ENCODE measurements at regions of chr12 and their contacts with region 1.

Region 1: DNA sequence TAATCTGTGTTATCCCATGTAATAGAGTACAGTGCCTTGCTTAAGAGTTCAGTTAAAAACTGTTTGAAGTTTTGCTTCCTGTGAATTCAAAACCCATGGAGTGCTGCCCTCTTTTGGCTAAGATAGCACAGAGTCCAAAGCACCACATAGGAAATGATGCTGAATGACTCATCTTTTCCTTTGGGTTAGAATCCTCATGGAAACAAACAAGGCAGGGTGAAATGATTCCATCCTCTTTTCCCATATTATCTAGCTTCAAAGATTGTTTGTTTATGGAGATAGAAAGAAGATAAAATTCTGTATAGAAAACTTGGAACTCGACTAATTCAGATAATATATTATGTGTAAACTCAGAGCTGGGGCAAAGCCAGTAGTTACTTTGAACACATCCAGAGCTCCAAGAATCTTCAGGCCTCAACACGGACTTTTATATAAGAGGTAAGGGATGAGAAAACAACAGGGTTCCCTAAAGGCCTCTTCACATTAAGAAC is 87.4 kb downstream of the OTOGL start:
- DNase-seq: peak; percentile 28 to 64
- H3K4me3 ChIP-seq: no peak overlapping the region
- H3K27ac ChIP-seq: no peak overlapping the region
- H3K4me1 ChIP-seq: peaks cover 4% of the 10 kb centered on the region; the same call in 1 of the 2 replicates
- H3K27me3 ChIP-seq: no peaks in the 10 kb centered on the region
- CTCF ChIP-seq: peak; percentile 81

Region 2: DNA sequence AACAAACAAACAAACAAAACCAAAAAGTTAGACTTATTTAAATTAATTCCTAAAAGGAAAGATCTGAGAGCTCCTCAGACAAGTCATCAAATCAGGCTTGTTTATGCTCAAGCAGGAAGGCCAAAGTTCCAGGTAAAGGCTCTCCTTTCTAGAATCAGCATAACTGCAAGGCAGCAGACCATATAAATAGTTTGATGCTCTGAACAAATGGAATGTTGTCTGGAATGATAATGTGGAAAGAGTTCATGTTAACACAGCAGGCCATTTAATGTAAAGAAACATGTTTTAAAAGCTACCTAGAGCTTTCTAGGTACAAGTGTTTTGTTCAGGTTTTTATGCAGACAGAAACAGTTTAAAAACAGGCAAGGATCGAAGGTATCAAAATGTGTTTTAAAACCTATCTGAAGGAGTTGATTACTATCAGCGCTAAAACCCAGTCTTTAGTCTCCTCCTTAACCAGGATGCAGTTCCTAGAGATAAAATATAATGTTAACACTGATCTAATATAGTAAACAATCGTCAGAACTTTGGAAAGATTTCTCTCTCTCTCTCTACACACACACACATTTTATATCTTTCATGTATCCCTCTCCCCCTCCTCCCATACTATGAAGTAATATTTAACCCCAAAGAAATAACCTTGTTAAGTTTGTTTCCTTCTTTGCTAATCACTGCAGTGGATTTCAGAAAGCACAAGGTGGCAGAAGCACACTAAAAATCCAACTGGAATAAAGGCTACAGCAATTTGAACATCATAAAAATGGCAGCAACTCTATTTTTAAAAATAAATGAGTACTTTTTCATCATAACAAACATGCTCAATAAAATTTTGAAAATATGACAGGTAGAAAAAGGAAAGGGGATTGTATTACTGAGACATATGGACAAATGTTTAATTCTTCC is 631.5 kb before region 1 on chr12:
- CTCF ChIA-PET with region 1: no interaction called
- POLR2A ChIA-PET with region 1: no interaction called
- intact Hi-C with region 1: loop called (anchors 1 kb)
- DNase-seq: peak in 1 of 2 experiments; percentile 39
- H3K4me3 ChIP-seq: no peak overlapping the region
- H3K27ac ChIP-seq: 0 out of 2 replicates have a peak overlapping the region, but pooled peaks have one; percentile 31
- H3K4me1 ChIP-seq: peaks cover 12% of the 10 kb centered on the region
- H3K27me3 ChIP-seq: no peaks in the 10 kb centered on the region
- CTCF ChIP-seq: peak; percentile 69

Region 3: GRCh38 chr12:79886917-79887519 is 299.8 kb before region 1 on chr12:
- CTCF ChIA-PET with region 1: no interaction called
- POLR2A ChIA-PET with region 1: no interaction called
- intact Hi-C with region 1: loop called (anchors 2 kb)
- DNase-seq: peak in 1 of 2 experiments; percentile 47
- H3K4me3 ChIP-seq: no peak overlapping the region
- H3K27ac ChIP-seq: no peak overlapping the region
- H3K4me1 ChIP-seq: no peaks in the 10 kb centered on the region
- H3K27me3 ChIP-seq: no peaks in the 10 kb centered on the region
- CTCF ChIP-seq: peak; percentile 77

Region 4: GRCh38 chr12:79935021-79935623 is 251.7 kb before region 1 on chr12 and contains the start of gene PPP1R12A:
- CTCF ChIA-PET with region 1: no interaction called
- POLR2A ChIA-PET with region 1: no interaction called
- intact Hi-C with region 1: loop called (anchors 1 kb)
- DNase-seq: peak; percentile 88 to 97
- H3K4me3 ChIP-seq: peak within 1 kb of the TSS; percentile 70
- H3K27ac ChIP-seq: peak within 1 kb of the TSS; percentile 71
- H3K4me1 ChIP-seq: peaks cover 29% of the 10 kb centered on the region
- H3K27me3 ChIP-seq: no peaks in the 10 kb centered on the region
- CTCF ChIP-seq: no peak
- total RNA-seq, gene PPP1R12A: 55.8 and 69.9 TPM in 2 replicates

Region 5: GRCh38 chr12:80165746-80166145 is 21.0 kb before region 1 on chr12:
- CTCF ChIA-PET with region 1: no interaction called
- POLR2A ChIA-PET with region 1: no interaction called
- intact Hi-C with region 1: no loop called
- DNase-seq: no peak
- H3K4me3 ChIP-seq: no peak overlapping the region
- H3K27ac ChIP-seq: no peak overlapping the region
- H3K4me1 ChIP-seq: no peaks in the 10 kb centered on the region
- H3K27me3 ChIP-seq: no peaks in the 10 kb centered on the region
- CTCF ChIP-seq: no peak